ENCODE measurements at regions of chr14 and their contacts with region 1.

Region 1: GRCh38 chr14:56073799-56074198 is 44.4 kb upstream of the PELI2 start:
- DNase-seq: no peak
- H3K4me3 ChIP-seq: no peak overlapping the region
- H3K27ac ChIP-seq: no peak overlapping the region
- H3K4me1 ChIP-seq: no peaks in the 10 kb centered on the region
- H3K27me3 ChIP-seq: no peaks in the 10 kb centered on the region
- CTCF ChIP-seq: no peak
- POLR2A ChIP-seq: no peak

Region 2: GRCh38 chr14:56027916-56028712 is 45.7 kb before region 1 on chr14:
- intact Hi-C with region 1: loop called (anchors 5 kb)
- DNase-seq: no peak
- H3K4me3 ChIP-seq: no peak overlapping the region
- H3K27ac ChIP-seq: peak overlapping the region in 1 of 2 donors; percentile 15
- H3K4me1 ChIP-seq: no peaks in the 10 kb centered on the region
- H3K27me3 ChIP-seq: no peaks in the 10 kb centered on the region
- CTCF ChIP-seq: no peak
- POLR2A ChIP-seq: no peak

Region 3: DNA sequence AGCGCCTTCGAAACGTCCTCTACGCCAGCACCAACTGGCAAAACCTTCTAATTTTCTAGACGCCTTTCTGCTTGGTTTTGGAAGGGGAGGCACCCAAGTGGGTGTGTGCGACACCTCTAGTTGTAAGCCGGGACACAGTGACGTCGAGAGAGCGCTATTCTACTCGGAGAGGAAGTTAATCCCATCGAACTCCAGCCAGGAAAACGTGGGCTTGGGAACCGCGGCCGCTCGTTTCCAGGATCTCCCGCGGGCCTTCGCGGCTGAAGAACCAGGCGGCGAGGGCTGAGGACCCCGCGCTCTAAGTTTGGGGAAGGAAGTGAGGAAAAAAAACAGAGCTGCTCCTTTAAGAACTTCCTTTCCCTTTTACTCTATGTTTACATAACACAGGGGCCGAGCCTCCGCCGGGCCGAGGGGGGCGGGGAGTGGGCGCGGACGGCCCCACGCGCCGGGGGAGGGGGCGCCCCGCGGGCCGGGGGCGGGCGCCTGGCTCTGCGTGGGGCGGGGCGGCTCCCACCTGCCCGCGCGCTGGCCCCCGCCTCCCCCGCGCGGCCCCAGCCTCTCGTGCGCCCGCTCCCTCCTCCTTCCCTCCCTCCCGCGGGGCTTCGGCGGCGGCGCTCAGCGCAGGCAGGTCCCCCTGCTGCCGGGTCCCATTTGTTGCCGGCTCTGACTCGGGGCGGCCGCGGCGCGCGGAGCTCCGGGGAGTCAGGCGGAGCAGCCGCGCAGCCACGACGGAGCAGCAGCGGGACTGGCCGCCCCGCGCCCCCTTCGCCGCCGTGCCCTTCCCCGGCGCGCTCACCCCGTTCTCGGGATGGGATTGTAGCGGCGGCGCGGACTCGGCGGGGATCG is 44.2 kb after region 1 on chr14 and contains the start of gene PELI2:
- intact Hi-C with region 1: no loop called
- DNase-seq: peak; percentile 65 to 69
- H3K4me3 ChIP-seq: peak within 1 kb of the TSS; percentile 81 to 86 (median 83)
- H3K27ac ChIP-seq: peak within 1 kb of the TSS; percentile 95 to 96
- H3K4me1 ChIP-seq: no peaks in the 10 kb centered on the region
- H3K27me3 ChIP-seq: no peaks in the 10 kb centered on the region
- CTCF ChIP-seq: peak in 1 of 3 donors; percentile 22
- POLR2A ChIP-seq: no peak
- total RNA-seq, gene PELI2: 11.5 to 24.1 (median 16.2) TPM

Measured in breast epithelium (tissue), 4 donors.